ENCODE measurements at regions of chr20 and their contacts with region 1.

Region 1: GRCh38 chr20:51014797-51015722 is 7.8 kb downstream of the KCNG1 start:
- DNase-seq: no peak
- H3K4me3 ChIP-seq: no peak overlapping the region
- CTCF ChIP-seq: peak; percentile 88

Region 2: GRCh38 chr20:50540620-50541605 is 474.1 kb before region 1 on chr20:
- CTCF ChIA-PET with region 1: no interaction called
- POLR2A ChIA-PET with region 1: no interaction called
- DNase-seq: peak; percentile 36
- H3K4me3 ChIP-seq: no peak overlapping the region
- CTCF ChIP-seq: no peak

Region 3: DNA sequence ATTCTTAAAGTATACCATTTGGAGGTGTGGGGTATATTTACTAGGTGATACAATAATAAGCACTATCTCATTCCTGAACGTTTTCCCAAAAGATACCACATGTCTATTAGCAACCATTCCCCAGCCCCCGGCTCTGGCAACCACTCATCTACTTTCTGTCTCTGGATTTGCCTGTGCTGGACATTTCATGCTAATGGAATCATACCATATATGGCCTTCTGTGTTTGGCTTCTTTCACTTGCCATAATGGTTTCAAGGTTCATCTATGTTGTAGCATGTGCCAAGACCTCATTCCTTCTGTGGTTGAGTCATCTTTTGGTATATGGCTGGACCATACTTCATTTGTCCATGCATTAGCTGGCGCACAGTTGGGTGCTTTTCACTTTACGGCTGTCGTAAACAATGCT is 180.5 kb before region 1 on chr20:
- CTCF ChIA-PET with region 1: no interaction called
- POLR2A ChIA-PET with region 1: no interaction called
- DNase-seq: peak; percentile 94
- H3K4me3 ChIP-seq: no peak overlapping the region
- CTCF ChIP-seq: no peak

Region 4: DNA sequence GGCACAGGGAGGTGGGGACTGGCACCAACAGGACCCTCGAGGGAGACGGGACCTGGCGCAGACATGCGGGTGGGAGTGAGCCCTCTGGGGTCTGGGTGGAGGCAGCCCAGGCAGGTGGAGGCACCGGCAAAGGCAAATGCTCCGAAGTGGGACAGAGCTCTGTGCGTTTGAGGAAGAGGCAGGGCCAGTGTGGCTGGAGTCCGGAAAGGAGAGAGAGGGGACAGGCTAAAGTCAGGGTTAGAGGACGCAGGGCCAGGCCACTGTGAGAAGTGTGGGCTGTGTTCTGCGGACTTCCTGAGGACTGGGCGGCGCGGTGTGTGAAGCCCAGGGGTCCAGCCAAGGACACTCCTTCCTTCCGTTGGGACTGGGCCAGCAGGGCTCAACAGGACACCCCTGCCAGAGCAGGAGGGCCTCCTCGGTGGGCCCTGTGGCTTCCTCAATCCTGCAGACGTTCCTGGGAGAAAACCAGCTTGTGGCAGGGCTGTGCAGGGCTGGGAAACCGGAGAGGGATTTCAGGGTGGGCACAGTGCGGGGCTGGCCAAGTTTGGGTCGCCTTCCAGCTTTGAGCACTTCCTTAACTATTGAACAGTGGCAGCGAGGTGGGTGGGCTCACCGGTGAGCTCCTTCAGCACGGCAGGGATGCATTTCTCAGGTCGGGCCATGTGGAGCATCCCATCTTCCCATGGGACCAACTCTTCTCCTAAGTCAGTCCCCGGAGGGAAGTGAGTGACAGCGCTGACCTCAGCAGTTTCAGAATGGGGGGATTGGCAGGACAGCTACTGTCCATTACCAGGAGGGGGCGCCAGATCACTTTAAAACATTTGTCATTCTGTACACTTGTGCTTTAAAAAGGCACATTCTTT is 34.0 kb before region 1 on chr20:
- CTCF ChIA-PET with region 1: interaction called, 14 read pairs
- POLR2A ChIA-PET with region 1: no interaction called
- DNase-seq: no peak
- H3K4me3 ChIP-seq: no peak overlapping the region
- CTCF ChIP-seq: peak; percentile 77

Region 5: GRCh38 chr20:50992733-50993457 is 22.2 kb before region 1 on chr20:
- CTCF ChIA-PET with region 1: interaction called, 38 read pairs
- POLR2A ChIA-PET with region 1: no interaction called
- DNase-seq: no peak
- H3K4me3 ChIP-seq: no peak overlapping the region
- CTCF ChIP-seq: peak; percentile 57

Region 6: GRCh38 chr20:51036827-51037531 is 21.9 kb after region 1 on chr20:
- CTCF ChIA-PET with region 1: interaction called, 10 read pairs
- POLR2A ChIA-PET with region 1: no interaction called
- DNase-seq: no peak
- H3K4me3 ChIP-seq: no peak overlapping the region
- CTCF ChIP-seq: no peak

Region 7: DNA sequence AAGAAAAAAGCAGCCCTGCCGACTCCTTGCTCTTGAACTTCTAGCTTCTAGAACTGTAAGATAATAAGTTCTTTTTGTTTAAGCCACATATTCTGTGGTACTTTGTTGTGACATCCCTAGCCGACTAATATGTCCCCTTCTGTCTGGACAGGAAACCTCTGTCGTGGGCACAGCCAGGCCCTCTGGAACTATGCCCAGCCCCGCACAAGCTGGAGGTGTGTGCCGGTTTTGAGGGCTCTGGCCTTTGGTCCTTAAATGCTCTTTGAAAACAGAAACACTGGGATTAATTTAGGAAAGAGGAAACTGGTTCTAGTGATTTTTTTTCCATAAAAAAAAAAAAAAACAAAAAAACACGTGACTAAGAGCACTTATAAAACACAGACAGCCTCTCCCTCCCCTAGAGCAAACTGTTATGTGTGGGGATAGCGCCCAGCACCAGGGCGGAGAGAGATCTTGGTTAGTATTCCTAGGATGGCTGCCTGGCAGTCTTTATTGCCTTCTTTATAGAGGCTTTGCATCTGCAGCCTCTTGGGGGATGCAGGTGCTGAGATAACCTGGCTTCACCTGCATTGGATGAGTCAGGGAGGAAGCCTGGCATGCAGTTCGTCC is 283.2 kb after region 1 on chr20:
- CTCF ChIA-PET with region 1: interaction called, 144 read pairs
- POLR2A ChIA-PET with region 1: no interaction called
- DNase-seq: no peak
- H3K4me3 ChIP-seq: no peak overlapping the region
- CTCF ChIP-seq: no peak

Region 8: DNA sequence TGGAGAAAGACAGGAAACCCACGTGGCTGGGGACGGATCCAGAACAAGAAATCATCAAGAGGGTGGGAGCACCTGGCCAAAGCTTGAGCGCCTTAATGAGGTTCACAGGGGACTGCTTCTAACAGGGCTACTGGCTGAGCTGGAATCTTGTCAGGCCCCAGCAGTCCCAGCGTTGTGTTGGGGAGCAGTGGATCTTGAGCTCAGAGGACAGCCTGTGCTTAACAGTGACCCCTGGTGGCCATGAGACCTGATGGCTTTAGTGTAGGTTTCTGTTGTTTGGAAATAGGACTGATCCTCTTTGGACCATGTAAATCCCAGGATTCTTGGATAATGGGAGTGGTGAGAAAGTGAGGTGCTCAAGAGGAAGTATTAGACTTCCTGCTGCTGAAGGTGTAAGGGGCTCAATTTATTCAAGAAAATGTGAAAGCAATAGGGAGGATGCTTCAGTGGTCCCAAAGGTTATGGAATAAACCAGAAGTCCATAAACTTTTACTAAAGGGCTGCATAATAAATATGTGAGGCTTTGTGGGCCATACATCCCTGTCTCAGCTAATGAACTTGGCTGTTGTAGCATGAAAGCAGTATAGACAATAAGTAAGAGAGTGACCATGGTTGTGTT is 311.2 kb after region 1 on chr20:
- CTCF ChIA-PET with region 1: interaction called, 14 read pairs
- POLR2A ChIA-PET with region 1: no interaction called
- DNase-seq: no peak
- H3K4me3 ChIP-seq: no peak overlapping the region
- CTCF ChIP-seq: no peak

Region 9: DNA sequence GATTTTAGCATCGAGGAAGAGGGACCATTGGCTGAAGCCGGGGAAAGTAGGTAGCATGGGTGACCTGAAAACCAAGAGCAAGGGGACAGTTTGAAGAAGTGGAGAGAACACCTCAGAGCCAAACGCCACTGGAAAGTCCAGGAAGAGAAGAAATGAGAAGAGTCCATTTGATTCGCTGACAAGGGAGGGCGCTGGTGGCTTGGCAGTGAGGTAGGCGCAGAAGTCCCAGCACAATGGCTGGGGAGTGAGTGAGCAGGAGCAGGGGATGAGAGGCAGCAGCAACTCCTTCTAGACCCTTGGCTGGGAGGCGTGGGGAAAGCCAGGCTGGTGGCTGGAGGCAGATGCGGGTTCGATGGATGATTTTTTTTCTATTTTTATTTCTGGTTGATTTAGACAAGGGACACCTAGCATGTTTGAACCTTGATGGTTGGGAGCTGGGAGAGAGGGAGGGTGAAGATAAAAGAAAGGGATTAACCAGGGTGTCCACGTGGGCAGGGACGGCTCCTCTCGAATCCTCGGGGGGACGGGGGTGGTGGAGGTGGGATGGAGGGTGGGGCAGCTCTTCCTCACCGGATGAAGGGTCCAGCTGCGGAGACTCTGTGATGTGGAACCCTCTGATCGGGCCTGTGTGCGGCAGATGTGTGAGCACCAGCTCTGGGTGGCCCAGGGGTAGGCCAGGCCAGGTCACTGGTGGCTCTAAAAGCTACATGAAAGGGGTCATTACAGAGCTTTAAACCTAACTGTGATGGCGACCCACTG is 363.3 kb after region 1 on chr20:
- CTCF ChIA-PET with region 1: no interaction called
- POLR2A ChIA-PET with region 1: no interaction called
- DNase-seq: no peak
- H3K4me3 ChIP-seq: no peak overlapping the region
- CTCF ChIP-seq: peak; percentile 12